CD14-positive monocyte (primary cell): ENCODE measurements at regions of chr9 and their contacts with region 1.

Region 1: DNA sequence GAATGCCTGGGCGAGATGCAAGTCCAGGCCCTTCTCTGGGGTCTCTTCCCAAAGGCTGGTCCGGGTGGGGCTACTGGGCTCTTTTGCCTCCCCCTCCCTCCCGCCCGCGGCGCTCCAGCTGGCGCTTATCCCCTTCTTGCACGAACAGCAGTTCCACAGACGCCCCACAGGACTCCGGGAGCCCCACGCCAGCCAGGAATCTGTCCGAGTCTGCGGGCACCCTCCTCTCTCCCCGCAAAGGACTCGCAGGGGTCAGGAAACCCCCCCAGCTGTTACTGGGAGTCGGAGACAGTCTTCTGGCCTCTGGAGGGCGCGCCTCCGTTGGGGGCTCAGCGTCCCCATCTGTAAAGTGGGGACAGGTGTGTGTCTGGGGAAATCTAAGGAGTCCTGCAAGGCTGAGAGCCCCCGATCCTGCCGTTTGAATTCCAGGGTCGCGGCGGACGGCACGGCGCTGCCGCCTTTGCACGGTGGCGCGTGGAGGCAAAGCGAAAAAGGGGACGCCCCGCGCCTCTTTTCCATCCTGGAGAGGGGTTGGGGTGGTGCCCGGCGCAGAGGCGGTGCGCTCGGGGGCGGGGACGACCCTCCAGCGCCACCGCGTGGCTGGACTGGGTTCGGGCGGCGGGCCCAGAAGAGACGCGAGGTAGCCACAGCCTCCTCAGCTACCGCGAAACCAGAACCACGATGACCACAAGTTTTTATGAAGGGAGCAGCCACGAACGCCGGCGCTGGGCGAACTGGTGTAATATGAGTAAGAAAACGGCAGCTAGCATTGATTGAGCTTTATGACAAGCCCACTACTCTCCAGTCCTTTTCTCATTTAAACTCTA is 2.9 kb upstream of the CCIN start:
- DNase-seq: peak; percentile 84 to 88 (median 85)
- H3K4me3 ChIP-seq: peak overlapping the region; percentile 27 to 71 (median 52)
- H3K4me3 Mint-ChIP-seq: peak overlapping the region; percentile 72 to 82
- H3K27ac ChIP-seq: no peak overlapping the region
- H3K27ac Mint-ChIP-seq: peak overlapping the region in 6 of 7 donors; percentile 23 to 87 (median 76)
- H3K4me1 ChIP-seq: peaks cover 18 to 28% of the 10 kb centered on the region in 2 donors
- H3K4me1 Mint-ChIP-seq: peaks cover 38% of the 10 kb centered on the region
- H3K27me3 ChIP-seq: no peaks in the 10 kb centered on the region
- H3K27me3 Mint-ChIP-seq: peaks cover 7 to 15% (median 7%) of the 10 kb centered on the region in 3 donors
- CTCF ChIP-seq: peak; percentile 92

Region 2: DNA sequence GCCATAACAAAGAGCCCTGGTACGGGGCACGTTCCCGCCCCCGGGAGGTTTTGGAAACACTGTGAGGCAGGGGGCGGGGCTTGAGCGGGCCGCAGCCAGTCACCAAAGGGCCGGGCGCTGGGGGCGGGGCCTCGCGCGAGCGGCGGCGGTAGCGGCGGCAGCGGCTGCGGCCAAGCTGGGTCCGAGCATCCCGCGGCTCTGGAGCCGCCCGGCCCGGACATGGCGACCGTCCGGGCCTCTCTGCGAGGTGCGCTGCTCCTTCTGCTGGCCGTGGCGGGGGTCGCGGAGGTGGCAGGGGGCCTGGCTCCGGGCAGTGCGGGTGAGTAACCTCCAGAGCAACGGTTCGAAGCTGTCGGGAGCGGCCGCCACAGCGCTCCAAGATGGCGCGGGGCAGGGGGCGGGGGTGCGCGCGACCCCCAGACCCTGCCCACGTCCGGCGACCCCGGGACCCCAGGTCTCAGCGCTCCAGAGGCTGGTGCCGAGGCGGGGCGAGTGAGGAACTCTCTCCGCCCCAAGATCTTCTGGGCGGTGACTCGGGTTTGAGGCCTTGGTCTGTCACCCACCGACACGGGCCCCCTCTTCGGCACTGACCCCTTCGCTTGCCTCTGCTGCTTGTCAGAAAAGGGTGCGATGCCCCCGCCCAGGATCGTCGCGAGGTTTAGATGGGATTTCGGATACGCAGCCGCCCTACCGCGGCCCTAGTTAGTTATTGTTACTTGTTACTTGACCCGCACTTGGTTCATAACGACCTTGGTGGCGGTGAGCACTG is 129.3 kb before region 1 on chr9 and contains the start of gene RECK:
- intact Hi-C with region 1: loop called (anchors 10 kb)
- DNase-seq: peak; percentile 64 to 77 (median 69)
- H3K4me3 ChIP-seq: peak within 1 kb of the TSS; percentile 59 to 88 (median 68)
- H3K4me3 Mint-ChIP-seq: peak within 1 kb of the TSS; percentile 94 to 97
- H3K27ac ChIP-seq: peak within 1 kb of the TSS in 1 of 2 donors; percentile 39
- H3K27ac Mint-ChIP-seq: peak within 1 kb of the TSS in 5 of 7 donors; percentile 22 to 82 (median 74)
- H3K4me1 ChIP-seq: peaks cover 25 to 27% of the 10 kb centered on the region in 2 donors
- H3K4me1 Mint-ChIP-seq: peaks cover 35% of the 10 kb centered on the region
- H3K27me3 ChIP-seq: peaks cover 0 to 3% of the 10 kb centered on the region in 2 donors
- H3K27me3 Mint-ChIP-seq: peaks cover 6 to 8% (median 8%) of the 10 kb centered on the region in 3 donors
- CTCF ChIP-seq: no peak
- polyA plus RNA-seq, gene RECK: 5.0 to 5.2 (median 5.1) TPM

Region 3: DNA sequence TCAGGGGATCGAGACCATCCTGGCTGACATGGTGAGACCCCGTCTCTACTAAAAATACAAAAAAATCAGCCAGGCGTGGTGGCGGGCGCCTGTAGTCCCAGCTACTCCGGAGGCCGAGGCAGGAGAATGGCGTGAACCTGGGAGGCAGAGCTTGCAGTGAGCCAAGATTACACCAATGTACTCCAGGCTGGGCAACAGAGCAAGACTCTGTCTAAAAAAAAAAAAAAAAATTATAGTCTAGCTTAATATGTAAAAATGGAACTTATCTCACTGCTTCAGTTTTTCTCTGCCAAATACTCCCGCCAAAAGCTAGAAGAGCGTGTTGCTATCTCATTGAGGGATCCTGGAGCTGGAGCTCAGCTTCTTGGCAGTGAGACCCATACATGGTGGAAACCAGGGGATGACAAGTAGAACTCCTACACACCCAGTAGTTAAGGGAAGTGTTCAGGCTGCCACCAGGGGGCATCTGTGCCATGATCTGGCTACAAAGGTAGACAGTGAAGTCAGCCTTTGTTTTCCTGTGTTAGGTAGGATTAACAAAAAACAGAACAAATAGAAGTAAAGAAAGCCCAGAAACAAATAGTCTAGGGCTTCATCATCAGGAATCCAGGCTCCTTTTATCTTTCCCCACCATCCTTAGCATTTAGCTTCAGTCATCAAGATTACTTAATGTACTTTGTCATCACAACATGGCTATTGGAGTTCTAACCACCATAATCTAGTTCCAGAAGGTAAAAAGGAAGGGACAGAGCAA is 63.4 kb before region 1 on chr9:
- intact Hi-C with region 1: loop called (anchors 1 to 2 kb)
- DNase-seq: peak; percentile 79 to 87 (median 83)
- H3K4me3 ChIP-seq: no peak overlapping the region
- H3K4me3 Mint-ChIP-seq: no peak overlapping the region
- H3K27ac ChIP-seq: peak overlapping the region in 1 of 2 donors; percentile 2
- H3K27ac Mint-ChIP-seq: peak overlapping the region in 5 of 7 donors; percentile 23 to 64 (median 55)
- H3K4me1 ChIP-seq: peaks cover 7% of the 10 kb centered on the region in 2 donors
- H3K4me1 Mint-ChIP-seq: peaks cover 8% of the 10 kb centered on the region
- H3K27me3 ChIP-seq: no peaks in the 10 kb centered on the region
- H3K27me3 Mint-ChIP-seq: peaks cover 0 to 3% (median 2%) of the 10 kb centered on the region in 3 donors
- CTCF ChIP-seq: peak; percentile 90

Region 4: GRCh38 chr9:36127652-36128244 is 38.6 kb before region 1 on chr9:
- intact Hi-C with region 1: loop called in 1 of 2 experiments (anchors 5 kb)
- DNase-seq: peak; percentile 83 to 87 (median 86)
- H3K4me3 ChIP-seq: peak overlapping the region in 1 of 3 experiments; percentile 66
- H3K4me3 Mint-ChIP-seq: peak overlapping the region; percentile 53 to 88
- H3K27ac ChIP-seq: peak overlapping the region; percentile 88 to 98
- H3K27ac Mint-ChIP-seq: peak overlapping the region; percentile 93 to 99 (median 98)
- H3K4me1 ChIP-seq: peaks cover 64 to 82% of the 10 kb centered on the region in 2 donors
- H3K4me1 Mint-ChIP-seq: peaks cover 72% of the 10 kb centered on the region
- H3K27me3 ChIP-seq: no peaks in the 10 kb centered on the region
- H3K27me3 Mint-ChIP-seq: peaks cover 0 to 4% (median 0%) of the 10 kb centered on the region in 3 donors
- CTCF ChIP-seq: no peak

Region 5: DNA sequence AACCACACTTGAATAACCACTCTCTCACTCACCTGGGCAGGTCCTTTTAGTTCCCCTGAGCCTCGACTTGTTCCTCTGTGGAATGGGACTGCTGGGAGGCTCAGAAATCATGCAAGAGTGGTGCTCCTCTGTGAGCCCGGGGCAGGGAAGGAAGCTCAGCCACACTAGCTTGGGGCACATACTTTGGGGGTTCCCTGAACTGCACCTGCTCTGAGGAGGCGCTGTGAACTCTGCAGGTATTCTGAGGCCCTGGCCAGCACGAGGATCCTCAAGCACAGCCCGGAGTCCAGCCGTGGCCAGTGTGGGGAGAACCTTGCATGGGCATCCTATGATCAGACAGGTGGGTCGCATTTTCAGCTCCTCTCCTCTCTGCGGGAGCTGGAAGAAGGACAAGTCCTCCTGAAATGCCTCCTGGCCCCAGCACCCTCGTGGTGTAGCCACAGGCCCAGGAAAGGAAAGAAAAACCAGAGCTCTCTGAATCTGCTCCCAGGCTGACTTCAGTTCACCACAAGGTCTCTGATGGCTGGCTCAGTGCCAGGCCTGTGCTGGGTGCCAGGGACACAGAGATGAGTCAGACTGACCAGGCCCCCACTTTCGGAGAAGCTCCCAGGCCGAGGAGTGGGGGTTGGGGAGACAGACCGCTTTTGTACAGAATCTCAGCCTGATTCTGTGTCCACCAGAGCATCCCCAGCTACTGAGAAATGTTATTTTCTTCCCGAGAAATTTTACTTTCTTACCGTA is 17.8 kb before region 1 on chr9:
- intact Hi-C with region 1: no loop called
- DNase-seq: peak; percentile 94 to 97 (median 96)
- H3K4me3 ChIP-seq: peak overlapping the region in 1 of 3 experiments; percentile 39
- H3K4me3 Mint-ChIP-seq: peak overlapping the region in 1 of 2 donors; percentile 15
- H3K27ac ChIP-seq: peak overlapping the region; percentile 97 to 99
- H3K27ac Mint-ChIP-seq: peak overlapping the region; percentile 89 to 100 (median 100)
- H3K4me1 ChIP-seq: peaks cover 100% of the 10 kb centered on the region in 2 donors
- H3K4me1 Mint-ChIP-seq: peaks cover 93% of the 10 kb centered on the region
- H3K27me3 ChIP-seq: no peaks in the 10 kb centered on the region
- H3K27me3 Mint-ChIP-seq: peaks cover 0 to 3% (median 0%) of the 10 kb centered on the region in 3 donors
- CTCF ChIP-seq: no peak

Region 6: GRCh38 chr9:36204906-36205547 is 38.7 kb after region 1 on chr9:
- intact Hi-C with region 1: no loop called
- DNase-seq: no peak
- H3K4me3 ChIP-seq: no peak overlapping the region
- H3K4me3 Mint-ChIP-seq: no peak overlapping the region
- H3K27ac ChIP-seq: no peak overlapping the region
- H3K27ac Mint-ChIP-seq: peak overlapping the region in 2 of 7 donors; percentile 64 to 74
- H3K4me1 ChIP-seq: no peaks in the 10 kb centered on the region
- H3K4me1 Mint-ChIP-seq: peaks cover 1% of the 10 kb centered on the region
- H3K27me3 ChIP-seq: no peaks in the 10 kb centered on the region
- H3K27me3 Mint-ChIP-seq: no peaks in the 10 kb centered on the region
- CTCF ChIP-seq: no peak

Region 7: GRCh38 chr9:36284226-36284625 is 117.9 kb after region 1 on chr9:
- intact Hi-C with region 1: no loop called
- DNase-seq: peak in 1 of 3 donors; percentile 6
- H3K4me3 ChIP-seq: no peak overlapping the region
- H3K4me3 Mint-ChIP-seq: no peak overlapping the region
- H3K27ac ChIP-seq: no peak overlapping the region
- H3K27ac Mint-ChIP-seq: no peak overlapping the region
- H3K4me1 ChIP-seq: no peaks in the 10 kb centered on the region
- H3K4me1 Mint-ChIP-seq: peaks cover 3% of the 10 kb centered on the region
- H3K27me3 ChIP-seq: no peaks in the 10 kb centered on the region
- H3K27me3 Mint-ChIP-seq: peaks cover 0 to 2% (median 2%) of the 10 kb centered on the region in 3 donors
- CTCF ChIP-seq: no peak

Region 8: GRCh38 chr9:36328798-36329411 is 162.6 kb after region 1 on chr9:
- intact Hi-C with region 1: no loop called
- DNase-seq: peak; percentile 42 to 62 (median 61)
- H3K4me3 ChIP-seq: no peak overlapping the region
- H3K4me3 Mint-ChIP-seq: no peak overlapping the region
- H3K27ac ChIP-seq: no peak overlapping the region
- H3K27ac Mint-ChIP-seq: no peak overlapping the region
- H3K4me1 ChIP-seq: peaks cover 8 to 10% of the 10 kb centered on the region in 2 donors
- H3K4me1 Mint-ChIP-seq: peaks cover 9% of the 10 kb centered on the region
- H3K27me3 ChIP-seq: no peaks in the 10 kb centered on the region
- H3K27me3 Mint-ChIP-seq: no peaks in the 10 kb centered on the region
- CTCF ChIP-seq: peak; percentile 94